HEK293 (cell line): ENCODE measurements at regions of chr11 and their contacts with region 1.

Region 1: DNA sequence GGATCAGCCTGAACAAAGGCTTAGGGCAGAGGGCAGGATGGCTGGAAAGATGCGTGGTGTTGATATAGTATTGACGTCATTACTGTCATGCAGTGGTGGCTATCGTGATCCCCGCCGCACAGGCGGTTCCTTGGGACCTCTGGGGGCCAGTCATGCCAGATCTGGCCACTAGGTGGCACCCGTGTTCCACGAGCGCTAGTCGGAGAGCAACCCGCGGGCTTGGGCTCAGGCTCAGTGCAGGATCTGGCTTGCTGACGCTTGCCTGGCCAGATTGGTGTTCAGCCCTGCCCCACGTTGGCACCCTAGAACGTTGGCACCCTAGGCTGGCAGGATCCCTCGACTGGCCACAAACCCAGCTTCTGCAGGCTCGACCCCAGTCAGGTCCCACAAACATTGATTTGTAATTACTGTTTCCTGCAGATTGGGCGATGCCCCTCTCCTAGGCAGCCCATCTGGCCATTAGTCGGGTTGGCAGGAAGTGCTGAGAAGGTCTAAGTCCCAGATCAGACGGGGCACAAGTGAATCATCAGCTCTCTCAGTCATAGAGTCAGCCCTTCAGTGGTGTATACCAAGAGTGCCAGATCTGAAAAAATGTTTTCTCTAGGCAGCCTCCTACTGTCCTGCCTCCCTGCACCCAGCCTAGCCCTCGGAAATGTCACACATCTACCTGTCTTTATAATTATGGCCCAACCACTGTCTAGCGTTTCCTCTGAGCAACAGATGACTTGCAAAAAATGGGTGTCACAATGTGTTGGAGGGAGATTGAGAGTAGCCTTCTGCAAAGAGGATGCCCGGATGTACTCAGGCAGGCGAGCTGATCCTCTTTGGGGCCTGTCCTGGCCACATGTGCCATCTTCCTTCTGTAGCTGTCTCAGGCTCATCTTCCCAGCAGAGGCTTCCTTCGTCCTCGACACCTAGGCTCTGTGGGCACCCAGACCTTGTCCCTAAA is 315.3 kb downstream of the TMEM135 start:
- H3K4me3 ChIP-seq: no peak overlapping the region
- H3K27ac ChIP-seq: no peak overlapping the region
- H3K4me1 ChIP-seq: no peaks in the 10 kb centered on the region
- CTCF ChIP-seq: peak; percentile 82

Region 2: DNA sequence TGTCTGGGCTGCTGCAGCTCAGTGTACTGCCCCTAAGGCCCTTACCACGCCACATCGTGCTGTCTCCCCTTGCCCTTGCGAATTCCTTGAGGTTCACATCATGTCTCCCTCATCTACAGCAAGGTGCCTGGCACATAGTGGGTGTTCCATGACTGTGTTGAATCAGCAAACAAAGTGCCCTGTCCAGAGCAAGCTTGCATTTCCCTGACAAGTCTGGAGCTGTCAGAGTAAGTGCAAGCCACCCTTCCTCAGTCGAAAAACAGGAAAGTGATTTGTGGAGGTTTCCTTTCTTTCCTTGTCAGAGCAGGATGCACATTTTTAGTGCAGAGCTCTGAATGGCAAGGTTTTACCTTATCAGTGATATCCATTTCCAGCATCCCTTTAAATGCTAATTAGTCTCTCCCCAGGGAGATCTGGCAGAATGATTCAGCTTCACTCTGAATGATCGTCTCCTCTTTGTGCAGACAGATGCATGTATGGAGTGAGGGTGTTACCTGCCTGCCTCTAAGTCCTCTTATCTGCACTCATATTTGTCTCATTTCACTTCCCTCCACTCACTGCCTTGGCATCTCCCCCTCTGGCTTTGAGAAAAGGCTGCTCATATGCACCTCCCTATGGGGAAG is 15.9 kb after region 1 on chr11:
- CTCF ChIA-PET with region 1: interaction called, 11 read pairs
- POLR2A ChIA-PET with region 1: no interaction called
- H3K4me3 ChIP-seq: no peak overlapping the region
- H3K27ac ChIP-seq: no peak overlapping the region
- H3K4me1 ChIP-seq: no peaks in the 10 kb centered on the region; the same call in 1 of the 2 replicates
- CTCF ChIP-seq: no peak

Region 3: GRCh38 chr11:87421422-87421821 is 68.4 kb after region 1 on chr11:
- CTCF ChIA-PET with region 1: interaction called, 82 read pairs
- POLR2A ChIA-PET with region 1: no interaction called
- H3K4me3 ChIP-seq: no peak overlapping the region
- H3K27ac ChIP-seq: no peak overlapping the region
- H3K4me1 ChIP-seq: no peaks in the 10 kb centered on the region
- CTCF ChIP-seq: no peak